IMR-90 (cell line): ENCODE measurements at regions of chr6 and their contacts with region 1.

Region 1: GRCh38 chr6:127737009-127737486 is 160.1 kb downstream of the C6orf58 start:
- DNase-seq: peak; percentile 73
- ATAC-seq: peak; percentile 92
- H3K4me3 ChIP-seq: no peak overlapping the region
- H3K27ac ChIP-seq: no peak overlapping the region
- H3K4me1 ChIP-seq: 0 out of 2 replicates have a peak, but pooled peaks cover 2% of the 10 kb centered on the region
- H3K27me3 ChIP-seq: no peaks in the 10 kb centered on the region
- CTCF ChIP-seq: peak; percentile 74
- POLR2A ChIP-seq: no peak
- RAD21 ChIP-seq: peak; percentile 95

Region 2: DNA sequence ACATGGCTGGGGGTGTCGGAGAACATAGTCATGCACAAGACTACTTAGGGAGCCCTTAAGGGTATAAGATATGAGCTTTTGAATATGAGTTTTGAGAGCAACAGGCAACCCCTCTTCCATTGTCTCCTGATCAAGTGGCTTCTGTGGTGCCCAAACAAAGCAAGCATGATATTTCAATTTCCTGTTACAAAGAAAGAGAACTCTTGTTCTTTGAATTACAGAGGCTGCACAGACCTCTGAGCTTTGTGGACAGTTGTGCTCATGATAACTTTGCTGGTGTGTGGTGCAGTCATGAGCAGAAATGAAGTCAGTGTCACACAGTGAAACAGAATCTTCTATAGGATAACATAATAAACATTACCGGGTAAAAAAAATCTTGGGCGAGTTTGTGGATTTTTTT is 230.7 kb after region 1 on chr6:
- CTCF ChIA-PET with region 1: no interaction called
- POLR2A ChIA-PET with region 1: no interaction called
- dilution Hi-C with region 1: no loop called
- in situ Hi-C with region 1: no loop called
- intact Hi-C with region 1: loop called (anchors 5 kb)
- DNase-seq: no peak
- ATAC-seq: no peak
- H3K4me3 ChIP-seq: no peak overlapping the region
- H3K27ac ChIP-seq: no peak overlapping the region
- H3K4me1 ChIP-seq: peaks cover 6% of the 10 kb centered on the region
- H3K27me3 ChIP-seq: no peaks in the 10 kb centered on the region
- CTCF ChIP-seq: no peak
- POLR2A ChIP-seq: no peak
- RAD21 ChIP-seq: no peak

Region 3: DNA sequence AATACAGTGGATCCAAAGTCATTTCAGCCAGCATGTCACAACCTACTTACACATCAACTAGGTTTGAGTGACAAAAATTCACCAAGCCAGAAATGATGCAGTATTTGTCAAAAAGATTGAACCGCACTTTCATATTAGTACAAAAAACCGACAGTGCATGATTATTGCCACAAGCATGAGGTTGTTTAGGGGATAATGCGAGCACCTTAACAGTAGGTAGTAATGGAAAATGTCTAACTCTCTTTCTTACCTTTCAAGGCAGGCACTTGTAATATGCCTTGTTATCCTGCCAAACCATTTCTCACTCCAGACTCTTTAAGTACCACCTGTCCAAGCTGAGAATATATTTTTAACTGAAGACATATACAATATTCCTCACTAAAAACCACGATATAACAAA is 434.1 kb after region 1 on chr6:
- CTCF ChIA-PET with region 1: no interaction called
- POLR2A ChIA-PET with region 1: no interaction called
- dilution Hi-C with region 1: no loop called
- in situ Hi-C with region 1: no loop called
- intact Hi-C with region 1: loop called (anchors 1 kb)
- DNase-seq: no peak
- ATAC-seq: no peak
- H3K4me3 ChIP-seq: no peak overlapping the region
- H3K27ac ChIP-seq: no peak overlapping the region
- H3K4me1 ChIP-seq: no peaks in the 10 kb centered on the region
- H3K27me3 ChIP-seq: no peaks in the 10 kb centered on the region
- CTCF ChIP-seq: no peak
- POLR2A ChIP-seq: no peak
- RAD21 ChIP-seq: no peak

Region 4: DNA sequence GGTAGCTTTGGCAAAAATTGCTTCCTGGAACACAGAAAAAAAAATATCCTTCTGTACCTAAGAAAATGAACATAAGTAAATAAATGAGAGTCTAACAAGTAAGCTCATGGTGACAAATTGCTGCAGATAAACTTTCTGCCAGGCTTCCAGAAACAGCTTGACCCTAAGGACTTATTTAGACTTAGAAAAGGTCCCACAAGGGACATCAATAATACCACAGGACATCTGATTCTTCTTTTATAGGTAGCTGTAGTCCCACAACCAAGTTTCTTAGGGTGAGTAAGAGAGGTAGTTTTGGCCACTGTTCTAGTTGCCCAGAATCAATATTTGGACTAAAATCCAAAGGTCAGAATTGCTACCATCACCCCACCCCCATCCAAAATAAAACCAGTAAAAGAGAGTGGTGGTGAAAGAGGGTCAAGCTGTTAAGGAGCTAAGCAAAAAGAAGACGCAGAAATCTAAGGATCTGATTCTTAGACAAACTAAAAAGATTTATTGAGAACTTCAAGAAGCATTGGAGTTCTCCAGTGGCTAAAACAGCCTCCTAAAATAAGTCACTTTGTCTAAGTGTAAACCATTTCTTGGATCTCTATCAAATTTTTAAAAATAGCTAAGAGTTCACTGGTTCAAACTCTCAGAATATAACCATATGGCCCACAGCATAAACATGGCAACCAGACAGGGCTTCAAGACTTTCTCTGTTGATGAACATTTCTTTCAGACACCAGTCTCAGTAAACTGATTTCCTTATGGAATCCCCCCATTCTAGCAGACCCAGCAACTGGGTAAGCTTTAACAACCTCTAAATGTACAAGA is 602.8 kb after region 1 on chr6:
- CTCF ChIA-PET with region 1: no interaction called
- POLR2A ChIA-PET with region 1: no interaction called
- dilution Hi-C with region 1: no loop called
- in situ Hi-C with region 1: no loop called
- intact Hi-C with region 1: loop called (anchors 5 kb)
- DNase-seq: peak; percentile 74
- ATAC-seq: peak; percentile 59
- H3K4me3 ChIP-seq: no peak overlapping the region
- H3K27ac ChIP-seq: peak overlapping the region; percentile 58; the same call in 1 of the 2 replicates
- H3K4me1 ChIP-seq: peaks cover 9% of the 10 kb centered on the region
- H3K27me3 ChIP-seq: no peaks in the 10 kb centered on the region
- CTCF ChIP-seq: no peak
- POLR2A ChIP-seq: no peak
- RAD21 ChIP-seq: no peak

Region 5: GRCh38 chr6:128731249-128732165 is 994.5 kb after region 1 on chr6:
- CTCF ChIA-PET with region 1: interaction called, 3 read pairs
- POLR2A ChIA-PET with region 1: no interaction called
- dilution Hi-C with region 1: no loop called
- in situ Hi-C with region 1: loop called (anchors 10 kb)
- intact Hi-C with region 1: loop called (anchors 2 kb)
- DNase-seq: peak; percentile 66
- ATAC-seq: peak; percentile 86
- H3K4me3 ChIP-seq: no peak overlapping the region
- H3K27ac ChIP-seq: no peak overlapping the region
- H3K4me1 ChIP-seq: no peaks in the 10 kb centered on the region
- H3K27me3 ChIP-seq: no peaks in the 10 kb centered on the region; the same call in 1 of the 2 replicates
- CTCF ChIP-seq: peak; percentile 80
- POLR2A ChIP-seq: 0 out of 2 replicates have a peak, but pooled peaks have one; percentile 23
- RAD21 ChIP-seq: peak; percentile 93